CD14-positive monocyte (primary cell): ENCODE measurements at regions of chr12 and their contacts with region 1.

Region 1: GRCh38 chr12:52372216-52373154 is 5.2 kb upstream of the KRT85 start:
- DNase-seq: peak; percentile 16 to 45 (median 22)
- H3K4me3 ChIP-seq: no peak overlapping the region
- H3K4me3 Mint-ChIP-seq: no peak overlapping the region
- H3K27ac ChIP-seq: no peak overlapping the region
- H3K27ac Mint-ChIP-seq: peak overlapping the region in 1 of 7 donors; percentile 26
- H3K4me1 ChIP-seq: no peaks in the 10 kb centered on the region
- H3K4me1 Mint-ChIP-seq: no peaks in the 10 kb centered on the region
- H3K27me3 ChIP-seq: no peaks in the 10 kb centered on the region
- H3K27me3 Mint-ChIP-seq: peaks cover 8 to 10% (median 10%) of the 10 kb centered on the region in 3 donors
- CTCF ChIP-seq: peak; percentile 71

Region 2: DNA sequence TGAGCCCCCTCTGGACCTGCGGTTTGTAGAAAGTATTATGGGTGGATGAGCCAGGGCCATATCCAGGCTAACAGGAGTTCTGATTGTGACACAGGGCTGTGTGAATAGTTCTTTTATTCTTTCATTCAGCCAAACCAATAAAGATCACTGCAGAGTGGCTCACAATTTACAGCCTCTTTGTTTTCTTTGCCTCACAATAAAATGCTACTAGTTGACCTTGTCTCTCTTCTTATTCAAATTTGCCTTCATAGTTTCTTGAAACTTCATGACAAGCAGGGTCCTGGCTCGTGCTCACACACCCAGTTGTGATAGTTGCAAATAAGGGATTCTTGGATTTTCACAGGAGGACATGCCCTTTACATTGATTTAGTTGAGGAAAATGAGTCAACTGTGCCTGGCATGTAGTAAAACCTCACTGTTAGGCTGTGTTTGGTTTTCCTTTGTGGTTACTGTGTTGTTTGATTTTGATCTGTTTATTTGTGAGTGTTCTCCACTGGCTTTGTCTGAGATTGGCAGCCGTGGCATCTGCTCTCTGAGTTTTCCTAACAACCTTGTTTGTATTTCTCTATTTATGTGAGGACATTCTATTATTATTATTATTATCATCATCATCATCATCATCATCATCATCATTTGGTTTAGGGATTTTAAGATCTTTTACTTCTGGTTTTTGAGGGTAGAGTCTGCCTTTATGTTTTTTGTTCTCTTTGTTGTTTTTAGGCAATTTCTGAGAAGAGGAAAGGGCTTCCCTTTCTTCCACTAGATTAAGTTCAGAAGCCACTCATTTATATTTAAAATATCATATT is 82.1 kb after region 1 on chr12:
- intact Hi-C with region 1: no loop called
- DNase-seq: no peak
- H3K4me3 ChIP-seq: no peak overlapping the region
- H3K4me3 Mint-ChIP-seq: no peak overlapping the region
- H3K27ac ChIP-seq: no peak overlapping the region
- H3K27ac Mint-ChIP-seq: no peak overlapping the region
- H3K4me1 ChIP-seq: no peaks in the 10 kb centered on the region
- H3K4me1 Mint-ChIP-seq: no peaks in the 10 kb centered on the region
- H3K27me3 ChIP-seq: no peaks in the 10 kb centered on the region
- H3K27me3 Mint-ChIP-seq: peaks cover 3 to 15% (median 13%) of the 10 kb centered on the region in 3 donors
- CTCF ChIP-seq: no peak

Region 3: GRCh38 chr12:52873832-52874572 is 501.5 kb after region 1 on chr12:
- intact Hi-C with region 1: loop called (anchors 2 to 5 kb)
- DNase-seq: peak; percentile 89 to 91 (median 91)
- H3K4me3 ChIP-seq: peak overlapping the region; percentile 45 to 64 (median 60)
- H3K4me3 Mint-ChIP-seq: peak overlapping the region; percentile 80 to 93
- H3K27ac ChIP-seq: peak overlapping the region; percentile 64 to 88
- H3K27ac Mint-ChIP-seq: peak overlapping the region; percentile 82 to 98 (median 91)
- H3K4me1 ChIP-seq: peaks cover 27 to 49% of the 10 kb centered on the region in 2 donors
- H3K4me1 Mint-ChIP-seq: peaks cover 44% of the 10 kb centered on the region
- H3K27me3 ChIP-seq: no peaks in the 10 kb centered on the region
- H3K27me3 Mint-ChIP-seq: peaks cover 6 to 17% (median 7%) of the 10 kb centered on the region in 3 donors
- CTCF ChIP-seq: no peak

Region 4: GRCh38 chr12:52879394-52880351 is 507.2 kb after region 1 on chr12:
- intact Hi-C with region 1: loop called (anchors 2 to 5 kb)
- DNase-seq: peak; percentile 65 to 78 (median 71)
- H3K4me3 ChIP-seq: peak overlapping the region; percentile 11 to 72 (median 30)
- H3K4me3 Mint-ChIP-seq: peak overlapping the region; percentile 73 to 90
- H3K27ac ChIP-seq: no peak overlapping the region
- H3K27ac Mint-ChIP-seq: peak overlapping the region in 2 of 7 donors; percentile 55 to 68
- H3K4me1 ChIP-seq: peaks cover 13 to 27% of the 10 kb centered on the region in 2 donors
- H3K4me1 Mint-ChIP-seq: peaks cover 23% of the 10 kb centered on the region
- H3K27me3 ChIP-seq: no peaks in the 10 kb centered on the region
- H3K27me3 Mint-ChIP-seq: peaks cover 2 to 15% (median 8%) of the 10 kb centered on the region in 3 donors
- CTCF ChIP-seq: peak; percentile 98

Region 5: DNA sequence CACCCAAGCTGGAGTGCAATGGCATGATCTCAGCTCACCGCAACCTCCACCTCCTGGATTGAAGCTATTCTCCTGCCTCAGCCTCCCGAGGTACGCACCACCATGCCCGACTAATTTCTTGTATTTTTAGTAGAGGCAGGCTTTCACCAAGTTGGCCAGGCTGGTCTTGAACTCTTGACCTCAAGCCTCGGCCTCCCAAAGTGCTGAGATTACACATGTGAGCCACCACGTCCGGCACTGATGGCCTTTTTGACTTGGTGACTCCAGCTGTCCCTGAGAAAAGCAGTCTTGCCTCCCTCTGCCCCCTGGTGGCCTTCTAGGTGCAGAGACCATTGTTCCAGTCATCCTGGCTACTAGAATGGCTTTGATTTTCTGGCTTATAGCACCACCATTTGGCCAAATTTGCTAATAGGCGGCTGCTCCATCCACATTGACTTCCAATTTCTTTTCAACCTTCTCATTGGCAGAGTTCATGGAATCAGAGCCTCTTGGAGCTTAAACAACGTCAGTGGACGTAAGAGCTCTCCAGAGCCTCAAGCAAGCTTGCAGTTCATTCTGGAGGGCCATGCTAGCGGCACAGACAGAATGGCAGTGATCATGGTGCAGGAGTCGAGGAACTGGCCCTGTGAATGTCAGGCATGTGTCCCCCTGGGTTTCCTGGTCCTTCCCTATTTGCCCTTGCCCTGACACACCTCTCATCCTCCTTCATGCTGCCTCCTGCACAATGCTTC is 608.4 kb after region 1 on chr12:
- intact Hi-C with region 1: loop called in 1 of 2 experiments (anchors 5 kb)
- DNase-seq: peak; percentile 81 to 91 (median 87)
- H3K4me3 ChIP-seq: no peak overlapping the region
- H3K4me3 Mint-ChIP-seq: no peak overlapping the region
- H3K27ac ChIP-seq: no peak overlapping the region
- H3K27ac Mint-ChIP-seq: peak overlapping the region in 3 of 7 donors; percentile 38 to 77 (median 42)
- H3K4me1 ChIP-seq: no peaks in the 10 kb centered on the region
- H3K4me1 Mint-ChIP-seq: peaks cover 1% of the 10 kb centered on the region
- H3K27me3 ChIP-seq: peaks cover 0 to 2% of the 10 kb centered on the region in 2 donors
- H3K27me3 Mint-ChIP-seq: peaks cover 5 to 13% (median 13%) of the 10 kb centered on the region in 3 donors
- CTCF ChIP-seq: peak; percentile 97